HepG2 (cell line): ENCODE measurements at regions of chr16 and their contacts with region 1.

Region 1: DNA sequence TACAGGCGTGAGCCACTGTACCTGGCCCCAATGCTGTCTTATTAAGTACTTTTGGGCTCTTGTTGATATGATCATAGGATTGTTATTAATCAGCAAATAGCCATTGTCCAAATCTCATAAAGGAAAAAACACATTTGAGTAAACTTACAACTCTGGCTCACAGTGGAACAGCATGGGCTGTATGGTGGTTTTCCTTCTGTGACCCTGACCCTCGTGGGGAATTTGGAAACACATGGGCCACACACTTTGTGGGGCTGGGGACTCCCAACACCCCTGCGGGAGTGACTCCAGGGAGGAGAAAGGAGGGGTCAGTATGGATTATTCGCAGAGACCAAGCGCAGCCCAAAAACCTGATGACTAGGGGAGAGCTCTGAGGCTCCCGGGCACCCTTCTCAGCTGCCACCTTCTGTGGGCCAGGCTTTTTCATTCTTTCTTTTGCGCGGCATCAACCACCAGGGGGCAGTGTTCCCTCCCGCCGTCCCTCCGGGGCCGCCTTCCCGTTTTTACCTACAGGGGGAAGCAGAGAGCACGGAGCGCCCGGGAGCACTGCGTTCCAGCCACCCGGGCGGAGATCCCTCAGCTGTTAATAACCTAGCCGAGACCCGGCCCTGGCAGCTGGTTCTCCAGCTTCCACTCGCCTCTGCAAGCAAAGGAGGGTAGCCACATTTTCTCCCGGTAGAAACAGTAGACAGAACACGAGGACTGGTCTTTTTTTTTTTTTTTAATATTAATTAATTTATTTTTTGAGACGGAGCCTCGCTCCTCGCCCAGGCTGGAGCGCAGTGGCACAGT is 9.7 kb downstream of the TSNAXIP1 start:
- DNase-seq: peak; percentile 74
- ATAC-seq: peak; percentile 83
- H3K4me3 ChIP-seq: peak overlapping the region in 1 of 3 experiments; percentile 42; a peak in 1 of 6 replicates
- H3K27ac ChIP-seq: no peak overlapping the region
- H3K4me1 ChIP-seq: peaks cover 17% of the 10 kb centered on the region
- H3K27me3 ChIP-seq: 0 out of 5 replicates have a peak, but pooled peaks cover 0 to 2% of the 10 kb centered on the region in 2 experiments
- CTCF ChIP-seq: peak; percentile 99
- EP300 ChIP-seq: peak in 1 of 2 experiments; percentile 35; a peak in 1 of 4 replicates
- POLR2A ChIP-seq: no peak
- RAD21 ChIP-seq: peak; percentile 99

Region 2: GRCh38 chr16:67207857-67208519 is 608.4 kb before region 1 on chr16:
- CTCF ChIA-PET with region 1: no interaction called
- POLR2A ChIA-PET with region 1: no interaction called
- in situ Hi-C with region 1: no loop called
- intact Hi-C with region 1: no loop called
- DNase-seq: no peak
- ATAC-seq: peak; percentile 2; the same call in 2 of the 3 replicates
- H3K4me3 ChIP-seq: no peak overlapping the region
- H3K27ac ChIP-seq: no peak overlapping the region
- H3K4me1 ChIP-seq: peaks cover 56% of the 10 kb centered on the region
- H3K27me3 ChIP-seq: no peaks in the 10 kb centered on the region
- CTCF ChIP-seq: no peak
- EP300 ChIP-seq: no peak
- POLR2A ChIP-seq: peak in 1 of 2 experiments; percentile 49; a peak in 2 of 4 replicates
- RAD21 ChIP-seq: no peak

Region 3: GRCh38 chr16:67672739-67673662 is 143.4 kb before region 1 on chr16:
- CTCF ChIA-PET with region 1: interaction called, 17 read pairs
- POLR2A ChIA-PET with region 1: interaction called, 3 read pairs
- in situ Hi-C with region 1: no loop called
- intact Hi-C with region 1: no loop called
- DNase-seq: peak; percentile 72
- ATAC-seq: peak; percentile 45
- H3K4me3 ChIP-seq: no peak overlapping the region
- H3K27ac ChIP-seq: no peak overlapping the region
- H3K4me1 ChIP-seq: peaks cover 21% of the 10 kb centered on the region
- H3K27me3 ChIP-seq: no peaks in the 10 kb centered on the region
- CTCF ChIP-seq: peak; percentile 95
- EP300 ChIP-seq: no peak
- POLR2A ChIP-seq: no peak
- RAD21 ChIP-seq: peak; percentile 93

Region 4: GRCh38 chr16:67781565-67781921 is 34.9 kb before region 1 on chr16:
- CTCF ChIA-PET with region 1: no interaction called
- POLR2A ChIA-PET with region 1: no interaction called
- in situ Hi-C with region 1: no loop called
- intact Hi-C with region 1: no loop called
- DNase-seq: no peak
- ATAC-seq: no peak
- H3K4me3 ChIP-seq: no peak overlapping the region
- H3K27ac ChIP-seq: no peak overlapping the region
- H3K4me1 ChIP-seq: peaks cover 21% of the 10 kb centered on the region
- H3K27me3 ChIP-seq: no peaks in the 10 kb centered on the region
- CTCF ChIP-seq: no peak
- EP300 ChIP-seq: no peak
- POLR2A ChIP-seq: no peak
- RAD21 ChIP-seq: no peak

Region 5: DNA sequence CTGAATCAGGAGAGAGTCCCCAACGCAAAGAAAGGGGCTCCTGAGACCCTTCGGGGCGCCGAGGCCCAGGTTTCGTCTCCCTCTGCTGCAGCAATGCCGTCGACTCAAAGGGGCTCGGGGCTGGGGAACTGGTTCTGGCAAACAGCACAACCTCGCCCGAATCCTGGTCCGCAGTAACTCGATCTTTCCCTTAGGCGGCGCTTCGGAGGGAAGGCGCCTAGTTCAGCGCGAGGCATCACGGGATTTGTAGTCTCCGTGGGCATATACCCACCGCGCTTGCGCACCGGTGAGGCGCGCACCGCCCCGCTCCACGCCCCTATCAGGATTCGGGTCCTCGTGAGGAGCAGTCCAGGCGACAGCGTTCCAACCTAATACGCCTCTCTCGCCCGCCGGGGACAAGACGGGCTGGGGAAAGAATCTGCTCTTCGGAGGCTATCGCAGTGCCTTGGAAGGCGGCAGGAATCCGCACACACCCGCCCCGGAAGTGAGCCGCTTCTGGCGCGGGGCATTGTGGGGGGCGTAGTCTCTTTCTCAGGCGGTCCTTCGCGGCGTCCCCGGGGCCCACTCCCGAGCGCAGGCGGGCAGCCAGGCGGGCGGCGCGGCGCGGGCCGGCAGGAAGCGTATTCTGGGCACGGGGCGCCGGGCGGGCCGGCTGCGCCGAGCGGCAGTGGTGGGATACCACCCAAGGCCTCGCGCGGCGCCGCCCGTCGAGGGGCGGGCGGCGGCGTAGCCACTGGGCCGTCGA is 25.5 kb after region 1 on chr16 and contains the start of gene THAP11:
- CTCF ChIA-PET with region 1: interaction called, 28 read pairs
- POLR2A ChIA-PET with region 1: interaction called, 10 read pairs
- in situ Hi-C with region 1: no loop called
- intact Hi-C with region 1: loop called (anchors 1 kb)
- DNase-seq: peak; percentile 96
- ATAC-seq: peak; percentile 46
- H3K4me3 ChIP-seq: peak within 1 kb of the TSS; percentile 80 to 97 (median 92)
- H3K27ac ChIP-seq: peak within 1 kb of the TSS; percentile 92
- H3K4me1 ChIP-seq: peaks cover 52% of the 10 kb centered on the region
- H3K27me3 ChIP-seq: no peaks in the 10 kb centered on the region; a peak in 1 of 5 replicates
- CTCF ChIP-seq: peak; percentile 99
- EP300 ChIP-seq: 0 out of 4 replicates have a peak, but pooled peaks of 1 of the 2 experiments have one; percentile 2
- POLR2A ChIP-seq: peak in 1 of 2 experiments; percentile 68; a peak in 1 of 4 replicates
- RAD21 ChIP-seq: peak; percentile 54
- total RNA-seq, gene THAP11: 53.4 and 53.8 TPM in 2 replicates

Region 6: GRCh38 chr16:67872786-67873537 is 56.5 kb after region 1 on chr16 and contains the start of gene EDC4:
- CTCF ChIA-PET with region 1: interaction called, 18 read pairs
- POLR2A ChIA-PET with region 1: interaction called, 4 read pairs
- in situ Hi-C with region 1: no loop called
- intact Hi-C with region 1: no loop called
- DNase-seq: peak; percentile 65
- ATAC-seq: peak; percentile 87
- H3K4me3 ChIP-seq: peak within 1 kb of the TSS; percentile 85 to 98 (median 87)
- H3K27ac ChIP-seq: peak within 1 kb of the TSS; percentile 66
- H3K4me1 ChIP-seq: peaks cover 30% of the 10 kb centered on the region
- H3K27me3 ChIP-seq: no peaks in the 10 kb centered on the region; a peak in 1 of 5 replicates
- CTCF ChIP-seq: peak; percentile 43
- EP300 ChIP-seq: peak in 1 of 2 experiments; percentile 71; a peak in 3 of 4 replicates
- POLR2A ChIP-seq: peak; percentile 68 to 87
- RAD21 ChIP-seq: peak; percentile 83
- total RNA-seq, gene EDC4: 53.4 and 59.1 TPM in 2 replicates

Region 7: DNA sequence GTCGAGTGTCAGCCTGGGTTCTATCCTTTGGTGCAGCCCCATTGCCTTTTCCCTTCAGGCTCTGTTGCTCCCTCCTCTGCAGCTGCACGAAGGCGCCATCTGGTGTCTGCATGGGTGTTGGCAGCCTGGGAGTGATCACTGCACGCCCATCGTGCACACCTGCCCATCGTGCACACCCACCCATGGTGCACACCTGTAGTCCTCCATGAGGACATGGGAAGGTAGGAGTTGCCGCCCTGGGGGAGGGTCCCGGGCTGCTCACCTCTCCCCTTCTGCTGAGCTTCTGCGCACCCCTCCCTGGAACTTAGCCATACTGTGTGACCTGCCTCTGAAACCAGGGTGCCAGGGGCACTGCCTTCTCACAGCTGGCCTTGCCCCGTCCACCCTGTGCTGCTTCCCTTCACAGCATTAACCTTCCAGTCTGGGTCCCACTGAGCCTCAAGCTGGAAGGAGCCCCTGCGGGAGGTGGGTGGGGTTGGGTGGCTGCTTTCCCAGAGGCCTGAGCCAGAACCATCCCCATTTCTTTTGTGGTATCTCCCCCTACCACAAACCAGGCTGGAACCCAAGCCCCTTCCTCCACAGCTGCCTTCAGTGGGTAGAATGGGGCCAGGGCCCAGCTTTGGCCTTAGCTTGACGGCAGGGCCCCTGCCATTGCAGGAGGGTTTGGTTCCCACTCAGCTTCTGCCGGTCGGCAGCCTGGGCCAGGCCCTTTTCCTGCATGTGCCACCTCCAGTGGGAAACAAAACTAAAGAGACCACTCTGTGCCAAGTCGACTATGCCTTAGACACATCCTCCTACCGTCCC is 112.3 kb after region 1 on chr16:
- CTCF ChIA-PET with region 1: interaction called, 37 read pairs
- POLR2A ChIA-PET with region 1: no interaction called
- in situ Hi-C with region 1: loop called (anchors 5 kb)
- intact Hi-C with region 1: loop called (anchors 1 kb)
- DNase-seq: peak; percentile 69
- ATAC-seq: peak; percentile 71
- H3K4me3 ChIP-seq: no peak overlapping the region
- H3K27ac ChIP-seq: no peak overlapping the region
- H3K4me1 ChIP-seq: peaks cover 3% of the 10 kb centered on the region
- H3K27me3 ChIP-seq: no peaks in the 10 kb centered on the region
- CTCF ChIP-seq: peak; percentile 99
- EP300 ChIP-seq: no peak
- POLR2A ChIP-seq: 0 out of 4 replicates have a peak, but pooled peaks of 1 of the 2 experiments have one; percentile 8
- RAD21 ChIP-seq: peak; percentile 98

Region 8: GRCh38 chr16:68064791-68065365 is 248.4 kb after region 1 on chr16:
- CTCF ChIA-PET with region 1: interaction called, 8 read pairs
- POLR2A ChIA-PET with region 1: no interaction called
- in situ Hi-C with region 1: no loop called
- intact Hi-C with region 1: loop called (anchors 10 kb)
- DNase-seq: peak; percentile 61
- ATAC-seq: peak; percentile 97
- H3K4me3 ChIP-seq: no peak overlapping the region
- H3K27ac ChIP-seq: no peak overlapping the region
- H3K4me1 ChIP-seq: no peaks in the 10 kb centered on the region
- H3K27me3 ChIP-seq: no peaks in the 10 kb centered on the region
- CTCF ChIP-seq: peak; percentile 94
- EP300 ChIP-seq: no peak
- POLR2A ChIP-seq: no peak
- RAD21 ChIP-seq: peak; percentile 86